Activated CD4-positive, alpha-beta T cell treated with anti-CD3 and anti-CD28 coated beads for 36 hours (primary cell): ENCODE measurements at regions of chr11 and their contacts with region 1.

Region 1: GRCh38 chr11:111601979-111602864 is at the start of gene SIK2:
- DNase-seq: peak; percentile 94
- ATAC-seq: peak; percentile 87
- H3K4me3 Mint-ChIP-seq: peak within 1 kb of the TSS; percentile 83
- H3K27ac Mint-ChIP-seq: peak within 1 kb of the TSS; percentile 91
- H3K4me1 Mint-ChIP-seq: peaks cover 31% of the 10 kb centered on the region
- H3K27me3 Mint-ChIP-seq: peaks cover 2% of the 10 kb centered on the region
- total RNA-seq, gene SIK2: 6.0 to 10.9 TPM

Region 2: DNA sequence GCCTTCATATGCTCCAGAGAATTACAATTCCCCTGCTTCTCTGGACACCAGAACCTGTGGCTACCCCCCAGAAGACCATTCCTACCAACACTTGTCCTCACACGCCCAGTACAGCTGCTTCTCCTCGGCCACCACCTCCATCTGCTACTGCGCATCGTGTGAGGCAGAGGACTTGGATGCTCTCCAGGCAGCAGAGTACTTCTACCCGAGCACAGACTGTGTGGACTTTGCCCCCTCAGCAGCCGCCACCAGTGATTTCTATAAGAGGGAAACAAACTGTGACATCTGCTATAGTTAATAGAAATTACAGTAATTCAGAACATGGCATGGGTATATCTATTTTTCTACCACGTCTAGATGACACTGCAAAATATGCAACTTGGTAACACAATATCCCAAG is 294.1 kb before region 1 on chr11:
- CTCF ChIA-PET with region 1: no interaction called
- POLR2A ChIA-PET with region 1: no interaction called
- intact Hi-C with region 1: no loop called
- DNase-seq: no peak
- ATAC-seq: no peak
- H3K4me3 Mint-ChIP-seq: no peak overlapping the region
- H3K27ac Mint-ChIP-seq: no peak overlapping the region
- H3K4me1 Mint-ChIP-seq: no peaks in the 10 kb centered on the region
- H3K27me3 Mint-ChIP-seq: peaks cover 27% of the 10 kb centered on the region

Region 3: DNA sequence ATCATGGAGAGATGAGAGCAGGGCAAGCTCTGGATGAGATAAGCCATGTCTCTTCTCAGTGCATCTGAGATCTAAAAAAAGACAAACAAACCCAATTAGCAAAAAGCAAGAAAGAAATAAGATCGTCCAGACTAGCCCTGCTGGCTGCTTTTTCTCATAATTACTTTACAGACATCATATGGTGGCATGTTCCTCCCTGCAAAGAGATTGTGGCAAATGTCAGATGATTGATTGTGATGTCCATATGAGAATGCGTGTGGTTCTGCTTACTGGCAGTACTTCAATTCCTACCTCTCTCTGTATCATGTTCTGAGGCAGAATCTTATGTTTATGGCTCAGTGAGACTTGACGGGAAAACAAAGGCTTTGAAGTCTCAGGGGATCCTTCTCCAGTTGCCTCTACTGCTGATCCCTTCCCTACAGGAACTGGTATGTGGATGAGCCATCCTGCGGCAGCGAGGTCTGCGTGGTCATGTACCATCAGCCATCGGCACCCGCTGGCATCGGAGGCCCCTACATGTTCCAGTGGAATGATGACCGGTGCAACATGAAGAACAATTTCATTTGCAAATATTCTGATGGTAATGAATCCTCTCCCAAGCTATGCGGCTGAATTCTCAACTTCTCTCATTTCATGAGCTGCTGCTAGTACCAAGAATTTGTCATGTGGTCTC is 52.9 kb before region 1 on chr11:
- CTCF ChIA-PET with region 1: no interaction called
- POLR2A ChIA-PET with region 1: no interaction called
- intact Hi-C with region 1: no loop called
- DNase-seq: no peak
- ATAC-seq: no peak
- H3K4me3 Mint-ChIP-seq: no peak overlapping the region
- H3K27ac Mint-ChIP-seq: no peak overlapping the region
- H3K4me1 Mint-ChIP-seq: no peaks in the 10 kb centered on the region
- H3K27me3 Mint-ChIP-seq: peaks cover 18% of the 10 kb centered on the region

Region 4: GRCh38 chr11:111586388-111586831 is 15.8 kb before region 1 on chr11:
- CTCF ChIA-PET with region 1: interaction called, 11 read pairs
- POLR2A ChIA-PET with region 1: no interaction called
- intact Hi-C with region 1: no loop called
- DNase-seq: peak; percentile 57
- ATAC-seq: peak; percentile 33
- H3K4me3 Mint-ChIP-seq: no peak overlapping the region
- H3K27ac Mint-ChIP-seq: no peak overlapping the region
- H3K4me1 Mint-ChIP-seq: no peaks in the 10 kb centered on the region
- H3K27me3 Mint-ChIP-seq: no peaks in the 10 kb centered on the region

Region 5: DNA sequence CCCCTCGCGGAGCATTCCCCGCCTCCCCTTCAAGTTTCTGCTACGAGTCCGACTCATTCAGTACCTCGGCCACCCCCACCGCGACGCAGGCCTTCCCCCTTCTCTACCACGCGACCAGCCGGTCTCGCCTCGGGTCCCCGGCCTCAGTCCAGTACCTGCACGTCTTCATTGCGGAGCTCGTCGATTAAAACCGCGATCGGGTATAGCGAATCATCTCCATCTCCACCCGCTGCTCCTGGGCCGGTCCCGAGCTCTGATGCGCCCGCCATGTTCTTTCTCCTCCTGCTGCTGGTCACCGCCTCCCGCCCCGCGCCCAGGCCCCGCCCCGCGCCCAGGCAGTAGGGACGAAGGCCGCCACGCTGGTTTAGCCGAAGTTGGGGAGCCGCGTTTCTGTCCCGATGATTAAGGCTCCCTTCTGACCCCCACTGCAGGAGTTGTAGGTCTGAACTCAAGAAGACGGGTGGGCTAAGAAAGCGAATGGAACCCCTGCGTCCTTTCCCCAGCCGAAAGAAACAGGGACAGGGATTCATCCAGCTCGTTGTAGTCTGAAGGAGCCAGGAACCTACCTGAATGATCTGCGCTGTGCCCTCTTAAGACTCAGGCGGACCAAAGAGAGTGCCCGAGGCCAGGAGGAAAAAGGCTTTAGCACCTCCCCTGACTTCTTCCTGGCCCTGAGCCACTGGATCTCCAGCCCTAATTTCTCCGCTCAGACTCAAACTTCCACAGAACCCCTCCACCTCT is 164.0 kb after region 1 on chr11 and contains the start of gene PPP2R1B:
- CTCF ChIA-PET with region 1: interaction called, 17 read pairs
- POLR2A ChIA-PET with region 1: interaction called, 5 read pairs
- intact Hi-C with region 1: loop called (anchors 1 kb)
- DNase-seq: peak; percentile 85
- ATAC-seq: peak; percentile 95
- H3K4me3 Mint-ChIP-seq: peak within 1 kb of the TSS; percentile 85
- H3K27ac Mint-ChIP-seq: peak within 1 kb of the TSS; percentile 98
- H3K4me1 Mint-ChIP-seq: peaks cover 32% of the 10 kb centered on the region
- H3K27me3 Mint-ChIP-seq: no peaks in the 10 kb centered on the region
- total RNA-seq, gene PPP2R1B: 39.1 to 53.9 TPM

Region 6: GRCh38 chr11:111870886-111871692 is 268.9 kb after region 1 on chr11 and contains the start of gene ALG9:
- CTCF ChIA-PET with region 1: interaction called, 3 read pairs
- POLR2A ChIA-PET with region 1: no interaction called
- intact Hi-C with region 1: loop called in 1 of 2 experiments (anchors 2 kb)
- DNase-seq: peak; percentile 94
- ATAC-seq: peak; percentile 87
- H3K4me3 Mint-ChIP-seq: peak within 1 kb of the TSS; percentile 95
- H3K27ac Mint-ChIP-seq: peak within 1 kb of the TSS; percentile 90
- H3K4me1 Mint-ChIP-seq: peaks cover 26% of the 10 kb centered on the region
- H3K27me3 Mint-ChIP-seq: no peaks in the 10 kb centered on the region
- total RNA-seq, gene ALG9: 30.4 to 41.2 TPM

Region 7: DNA sequence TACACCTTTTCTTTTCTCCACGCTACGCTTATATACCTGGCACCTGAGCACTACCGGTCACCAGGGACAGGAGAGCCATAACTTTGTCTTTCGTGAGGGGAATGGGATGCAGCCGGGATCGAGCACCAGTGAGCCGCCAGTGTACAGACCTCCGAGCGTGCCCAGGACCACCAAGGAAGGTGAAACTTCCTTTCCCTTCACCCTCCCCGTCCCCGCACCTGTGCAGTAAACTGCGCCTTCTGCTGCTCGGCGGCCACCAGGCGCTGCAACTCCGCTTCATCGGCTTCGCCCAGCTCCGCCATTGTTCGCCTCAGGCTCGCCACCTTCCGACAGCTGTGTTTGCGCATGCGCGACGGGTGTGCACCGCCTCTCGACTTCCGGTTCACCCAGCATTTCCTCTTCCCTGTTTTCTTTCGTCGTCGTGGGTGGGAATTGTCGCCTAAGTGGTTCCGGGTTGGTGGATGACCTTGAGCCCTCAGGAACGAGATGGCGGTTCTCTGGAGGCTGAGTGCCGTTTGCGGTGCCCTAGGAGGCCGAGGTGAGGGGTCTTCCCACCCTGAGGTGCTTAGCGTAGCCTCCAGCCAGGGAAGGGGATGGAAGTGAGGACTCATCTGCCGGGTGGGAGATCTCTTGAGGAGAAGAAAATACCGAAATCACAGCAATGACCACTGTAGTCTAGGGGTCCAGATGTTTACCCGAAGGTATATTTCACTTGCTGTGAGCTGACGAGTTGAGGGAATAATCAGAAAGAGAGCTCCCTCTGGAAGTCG is 484.4 kb after region 1 on chr11 and contains the starts of genes SDHD and TIMM8B:
- CTCF ChIA-PET with region 1: no interaction called
- POLR2A ChIA-PET with region 1: no interaction called
- intact Hi-C with region 1: loop called (anchors 1 to 5 kb)
- DNase-seq: peak; percentile 97
- ATAC-seq: peak; percentile 86
- H3K4me3 Mint-ChIP-seq: peak within 1 kb of the TSS; percentile 97
- H3K27ac Mint-ChIP-seq: peak within 1 kb of the TSS; percentile 93
- H3K4me1 Mint-ChIP-seq: peaks cover 63% of the 10 kb centered on the region
- H3K27me3 Mint-ChIP-seq: no peaks in the 10 kb centered on the region
- total RNA-seq, gene SDHD: 79.8 to 84.9 TPM
- total RNA-seq, gene TIMM8B: 50.5 to 52.6 TPM

Region 8: GRCh38 chr11:112280268-112281126 is 678.3 kb after region 1 on chr11:
- CTCF ChIA-PET with region 1: no interaction called
- POLR2A ChIA-PET with region 1: no interaction called
- intact Hi-C with region 1: loop called in 1 of 2 experiments (anchors 10 kb)
- DNase-seq: peak; percentile 77
- ATAC-seq: peak; percentile 92
- H3K4me3 Mint-ChIP-seq: peak overlapping the region; percentile 82
- H3K27ac Mint-ChIP-seq: peak overlapping the region; percentile 76
- H3K4me1 Mint-ChIP-seq: peaks cover 14% of the 10 kb centered on the region
- H3K27me3 Mint-ChIP-seq: no peaks in the 10 kb centered on the region